Activated B cell treated with CpG ODN at 0.5 μM for 24 hours (primary cell): ENCODE measurements at regions of chr15 and their contacts with region 1.

Region 1: GRCh38 chr15:78979456-78980320 is 34.8 kb upstream of the CTSH start:
- DNase-seq: no peak
- ATAC-seq: no peak
- H3K4me3 Mint-ChIP-seq: peak overlapping the region; percentile 77
- H3K27ac Mint-ChIP-seq: peak overlapping the region; percentile 91
- H3K4me1 Mint-ChIP-seq: peaks cover 45% of the 10 kb centered on the region
- H3K27me3 Mint-ChIP-seq: no peaks in the 10 kb centered on the region
- CTCF ChIP-seq: no peak

Region 2: GRCh38 chr15:78909791-78910228 is 69.9 kb before region 1 on chr15:
- CTCF ChIA-PET with region 1: interaction called, 17 read pairs
- POLR2A ChIA-PET with region 1: no interaction called
- intact Hi-C with region 1: loop called (anchors 1 kb)
- DNase-seq: no peak
- ATAC-seq: peak; percentile 75
- H3K4me3 Mint-ChIP-seq: no peak overlapping the region
- H3K27ac Mint-ChIP-seq: peak overlapping the region; percentile 38
- H3K4me1 Mint-ChIP-seq: peaks cover 21% of the 10 kb centered on the region
- H3K27me3 Mint-ChIP-seq: no peaks in the 10 kb centered on the region
- CTCF ChIP-seq: no peak

Region 3: DNA sequence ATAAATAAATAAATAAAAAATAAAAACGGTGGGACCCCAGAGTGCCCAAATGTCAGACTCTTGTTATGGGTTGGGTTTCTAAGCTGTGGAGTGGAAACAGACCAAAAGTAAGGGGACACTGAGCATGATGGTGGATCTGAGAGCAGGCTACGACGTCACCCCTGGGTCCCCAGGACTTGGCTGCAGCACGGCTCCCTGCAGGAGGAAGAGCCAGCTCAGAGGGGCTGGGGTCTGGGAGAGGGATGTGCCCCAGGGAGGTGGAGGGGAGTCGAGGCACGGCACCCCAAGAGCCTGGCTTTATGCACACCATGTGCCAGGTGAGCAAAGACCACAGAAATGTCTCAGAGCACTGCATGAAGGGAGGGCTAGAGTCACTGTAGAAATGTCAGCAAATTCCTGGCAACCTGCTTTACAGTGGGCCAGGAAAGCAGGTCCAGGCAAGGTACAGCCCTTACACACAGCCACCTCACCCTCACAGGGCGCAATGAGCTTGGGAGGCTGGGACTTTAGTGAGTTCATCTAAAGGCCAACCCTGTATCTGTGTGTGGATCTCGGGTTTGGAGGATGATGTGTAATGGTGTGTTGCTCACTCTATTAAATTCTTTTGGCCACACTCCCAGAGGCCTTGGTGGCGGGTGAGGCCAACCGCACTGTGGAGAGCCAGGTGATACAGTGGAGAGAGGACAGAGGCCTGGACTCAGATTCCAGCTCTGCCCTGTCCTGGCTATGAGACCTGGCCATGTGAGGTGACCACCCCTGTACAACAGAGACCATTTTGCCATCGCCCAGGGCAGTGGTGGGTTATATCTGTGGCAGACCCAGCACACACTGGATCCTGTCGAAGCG is 48.9 kb before region 1 on chr15:
- CTCF ChIA-PET with region 1: interaction called, 5 read pairs
- POLR2A ChIA-PET with region 1: interaction called, 11 read pairs
- intact Hi-C with region 1: no loop called
- DNase-seq: no peak
- ATAC-seq: no peak
- H3K4me3 Mint-ChIP-seq: no peak overlapping the region
- H3K27ac Mint-ChIP-seq: peak overlapping the region; percentile 53
- H3K4me1 Mint-ChIP-seq: peaks cover 8% of the 10 kb centered on the region
- H3K27me3 Mint-ChIP-seq: no peaks in the 10 kb centered on the region
- CTCF ChIP-seq: no peak

Region 4: GRCh38 chr15:78938658-78939488 is 40.8 kb before region 1 on chr15:
- CTCF ChIA-PET with region 1: interaction called, 3 read pairs
- POLR2A ChIA-PET with region 1: interaction called, 42 read pairs
- intact Hi-C with region 1: loop called (anchors 1 kb)
- DNase-seq: no peak
- ATAC-seq: peak; percentile 80
- H3K4me3 Mint-ChIP-seq: peak overlapping the region; percentile 78
- H3K27ac Mint-ChIP-seq: peak overlapping the region; percentile 96
- H3K4me1 Mint-ChIP-seq: peaks cover 80% of the 10 kb centered on the region
- H3K27me3 Mint-ChIP-seq: no peaks in the 10 kb centered on the region
- CTCF ChIP-seq: no peak

Region 5: GRCh38 chr15:78993931-78994530 is 14.3 kb after region 1 on chr15:
- CTCF ChIA-PET with region 1: interaction called, 6 read pairs
- POLR2A ChIA-PET with region 1: interaction called, 13 read pairs
- intact Hi-C with region 1: no loop called
- DNase-seq: no peak
- ATAC-seq: no peak
- H3K4me3 Mint-ChIP-seq: no peak overlapping the region
- H3K27ac Mint-ChIP-seq: no peak overlapping the region
- H3K4me1 Mint-ChIP-seq: peaks cover 14% of the 10 kb centered on the region
- H3K27me3 Mint-ChIP-seq: no peaks in the 10 kb centered on the region
- CTCF ChIP-seq: no peak

Region 6: DNA sequence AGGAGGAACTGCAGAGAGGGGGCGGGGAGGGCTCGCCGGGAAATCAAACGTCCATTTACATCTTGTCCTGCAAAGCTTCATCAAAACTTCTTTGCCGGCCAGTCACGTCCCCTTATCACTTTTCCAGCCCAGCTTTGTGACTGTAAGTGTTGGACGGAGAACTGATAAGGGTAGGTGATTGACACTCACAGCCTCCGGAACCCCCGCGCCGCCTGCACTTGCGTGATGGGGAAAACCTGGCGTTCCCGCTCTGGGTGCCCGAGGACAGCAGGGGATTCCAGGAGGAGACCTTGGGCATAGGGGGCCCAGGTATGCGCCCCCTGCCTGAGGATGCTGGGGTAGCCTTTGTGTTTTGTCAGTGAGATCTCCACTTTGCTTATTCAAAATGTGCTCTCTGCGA is 230.0 kb after region 1 on chr15:
- CTCF ChIA-PET with region 1: no interaction called
- POLR2A ChIA-PET with region 1: no interaction called
- intact Hi-C with region 1: no loop called
- DNase-seq: no peak
- ATAC-seq: no peak
- H3K4me3 Mint-ChIP-seq: no peak overlapping the region
- H3K27ac Mint-ChIP-seq: no peak overlapping the region
- H3K4me1 Mint-ChIP-seq: no peaks in the 10 kb centered on the region
- H3K27me3 Mint-ChIP-seq: peaks cover 58% of the 10 kb centered on the region
- CTCF ChIP-seq: no peak